Left lung (tissue), 14 donors: ENCODE measurements at regions of chr18 and their contacts with region 1.

Region 1: DNA sequence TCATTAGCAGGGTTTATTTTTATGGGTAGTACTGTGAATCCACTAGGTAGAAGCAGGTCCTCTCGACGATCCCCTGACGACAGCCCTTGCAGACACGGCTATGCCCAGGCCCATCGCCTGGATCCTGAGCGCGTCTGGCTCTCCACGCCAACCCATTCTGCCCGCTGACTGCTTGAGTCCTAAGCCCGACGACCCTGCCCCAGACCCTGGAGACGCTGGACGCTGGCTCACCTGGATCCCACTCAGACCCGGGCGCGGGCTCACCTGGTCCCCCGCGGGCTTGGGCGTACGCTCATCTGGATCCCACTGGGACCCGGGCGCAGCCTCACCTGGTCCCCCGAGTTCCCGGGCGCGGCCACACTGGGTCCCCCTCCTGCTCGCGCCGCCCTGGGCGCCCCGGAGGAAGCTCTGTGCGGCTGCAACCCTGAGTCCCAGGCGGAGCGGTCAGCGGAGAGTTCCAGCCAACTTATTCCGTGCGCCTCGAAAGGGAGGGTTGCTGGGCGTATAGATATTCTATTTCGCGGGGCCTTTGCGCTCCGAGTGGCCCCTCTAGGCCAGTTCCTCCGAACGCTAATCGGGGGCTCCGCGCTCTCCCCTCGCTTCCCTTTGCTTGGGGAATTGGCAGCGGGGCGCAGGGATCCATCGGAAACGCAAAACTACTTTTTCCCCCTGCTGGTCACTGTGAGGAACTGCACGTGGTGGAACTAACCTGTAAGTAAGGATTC is 22.4 kb upstream of the RMP24 start:
- DNase-seq: peak; percentile 41 to 85 (median 71)
- ATAC-seq: peak; percentile 97
- H3K4me3 ChIP-seq: peak overlapping the region; percentile 31 to 47
- H3K27ac ChIP-seq: no peak overlapping the region
- H3K4me1 ChIP-seq: peaks cover 0 to 6% of the 10 kb centered on the region in 2 donors
- H3K27me3 ChIP-seq: peaks cover 0 to 10% of the 10 kb centered on the region in 2 donors
- CTCF ChIP-seq: peak; percentile 92 to 97

Region 2: GRCh38 chr18:35386600-35387351 is 563.3 kb before region 1 on chr18:
- intact Hi-C with region 1: loop called in 1 of 2 experiments (anchors 10 kb)
- DNase-seq: peak in 3 of 4 donors; percentile 58 to 81 (median 69)
- ATAC-seq: peak; percentile 94
- H3K4me3 ChIP-seq: no peak overlapping the region
- H3K27ac ChIP-seq: no peak overlapping the region
- H3K4me1 ChIP-seq: no peaks in the 10 kb centered on the region
- H3K27me3 ChIP-seq: no peaks in the 10 kb centered on the region
- CTCF ChIP-seq: peak; percentile 72 to 80

Region 3: DNA sequence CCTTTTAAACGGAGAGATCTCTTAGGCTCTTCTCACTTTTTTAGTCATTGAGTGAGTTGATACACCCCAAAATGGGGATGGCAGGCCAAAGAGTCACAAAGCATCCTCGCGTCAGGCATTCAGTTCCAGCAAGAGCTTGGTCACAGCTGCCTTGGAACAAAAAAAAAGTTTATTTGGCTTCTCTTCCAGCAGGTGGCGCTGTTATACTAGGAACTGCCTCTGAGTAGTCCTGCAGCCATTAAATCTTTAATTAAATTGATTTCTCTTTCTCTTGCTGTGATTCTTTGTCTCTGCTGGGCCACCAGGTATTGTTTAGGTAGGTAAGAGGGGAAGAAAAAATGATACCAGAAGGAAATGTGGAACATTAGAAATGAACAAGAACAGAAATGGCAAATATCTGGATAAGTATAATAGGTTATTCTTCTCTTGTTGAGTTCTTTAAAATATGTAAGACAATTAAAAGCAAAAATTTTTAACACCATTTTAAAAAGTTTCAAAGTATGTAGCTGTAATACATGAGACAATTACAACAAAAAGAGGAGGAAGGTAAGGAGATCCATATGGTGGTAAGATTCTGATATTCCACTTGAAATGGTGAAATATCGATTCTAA is 193.5 kb before region 1 on chr18:
- intact Hi-C with region 1: loop called in 1 of 2 experiments (anchors 5 kb)
- DNase-seq: peak in 2 of 4 donors; percentile 40 to 70
- ATAC-seq: peak; percentile 87
- H3K4me3 ChIP-seq: no peak overlapping the region
- H3K27ac ChIP-seq: no peak overlapping the region
- H3K4me1 ChIP-seq: no peaks in the 10 kb centered on the region
- H3K27me3 ChIP-seq: no peaks in the 10 kb centered on the region
- CTCF ChIP-seq: peak; percentile 70 to 84

Region 4: GRCh38 chr18:35851286-35851970 is 98.6 kb before region 1 on chr18:
- intact Hi-C with region 1: no loop called
- DNase-seq: no peak
- ATAC-seq: no peak
- H3K4me3 ChIP-seq: no peak overlapping the region
- H3K27ac ChIP-seq: no peak overlapping the region
- H3K4me1 ChIP-seq: no peaks in the 10 kb centered on the region
- H3K27me3 ChIP-seq: no peaks in the 10 kb centered on the region
- CTCF ChIP-seq: no peak

Region 5: GRCh38 chr18:36012891-36013290 is 62.8 kb after region 1 on chr18:
- intact Hi-C with region 1: no loop called
- DNase-seq: no peak
- ATAC-seq: no peak
- H3K4me3 ChIP-seq: no peak overlapping the region
- H3K27ac ChIP-seq: no peak overlapping the region
- H3K4me1 ChIP-seq: no peaks in the 10 kb centered on the region
- H3K27me3 ChIP-seq: no peaks in the 10 kb centered on the region
- CTCF ChIP-seq: no peak